CD8-positive, alpha-beta T cell (primary cell): ENCODE measurements at regions of chr12 and their contacts with region 1.

Region 1: DNA sequence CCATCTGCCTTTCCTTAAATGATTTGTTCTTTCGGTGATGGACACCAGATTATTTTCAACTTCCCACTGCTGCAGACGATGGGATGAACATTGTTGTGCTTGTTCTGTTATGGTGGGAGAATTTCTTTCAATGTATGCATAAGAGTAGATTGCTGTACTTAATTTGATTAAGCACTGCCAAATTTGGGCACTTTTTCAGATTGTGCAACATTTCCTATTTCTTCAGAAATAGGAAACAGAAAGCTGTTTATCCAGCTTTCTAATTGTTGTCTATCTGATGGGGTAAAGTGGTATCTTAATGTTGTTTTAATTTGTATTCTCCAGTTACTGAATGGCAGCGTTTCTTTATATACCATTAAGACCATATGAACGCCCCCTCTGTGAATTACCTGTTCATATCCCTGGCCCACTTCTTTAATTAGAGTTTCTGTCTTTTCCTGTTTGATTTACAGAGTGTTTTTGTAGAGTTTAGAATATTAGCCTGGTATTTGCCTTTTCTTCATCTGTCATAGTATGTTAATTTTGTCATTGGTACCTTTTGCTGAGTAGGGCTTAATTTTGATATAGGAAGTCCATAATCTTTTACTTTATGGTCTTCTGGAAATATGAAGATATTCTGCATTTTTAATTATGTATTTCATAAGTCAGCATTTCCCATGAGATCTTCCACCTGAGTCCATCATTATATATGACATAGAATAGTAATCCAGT is 59.6 kb downstream of the DIP2B start:
- DNase-seq: no peak
- ATAC-seq: no peak
- H3K4me3 ChIP-seq: no peak overlapping the region
- H3K4me3 Mint-ChIP-seq: no peak overlapping the region
- H3K27ac ChIP-seq: no peak overlapping the region
- H3K27ac Mint-ChIP-seq: peak overlapping the region; percentile 8
- H3K4me1 ChIP-seq: peaks cover 14% of the 10 kb centered on the region
- H3K4me1 Mint-ChIP-seq: peaks cover 53% of the 10 kb centered on the region
- H3K27me3 ChIP-seq: no peaks in the 10 kb centered on the region
- H3K27me3 Mint-ChIP-seq: no peaks in the 10 kb centered on the region
- CTCF ChIP-seq: no peak

Region 2: GRCh38 chr12:50581201-50582184 is 17.1 kb after region 1 on chr12:
- CTCF ChIA-PET with region 1: no interaction called
- POLR2A ChIA-PET with region 1: no interaction called
- intact Hi-C with region 1: loop called in 1 of 2 experiments (anchors 1 kb)
- DNase-seq: no peak
- ATAC-seq: no peak
- H3K4me3 ChIP-seq: no peak overlapping the region
- H3K4me3 Mint-ChIP-seq: no peak overlapping the region
- H3K27ac ChIP-seq: no peak overlapping the region
- H3K27ac Mint-ChIP-seq: no peak overlapping the region
- H3K4me1 ChIP-seq: no peaks in the 10 kb centered on the region
- H3K4me1 Mint-ChIP-seq: peaks cover 21% of the 10 kb centered on the region
- H3K27me3 ChIP-seq: no peaks in the 10 kb centered on the region
- H3K27me3 Mint-ChIP-seq: no peaks in the 10 kb centered on the region
- CTCF ChIP-seq: no peak